Tibial artery (tissue), 4 donors: ENCODE measurements at regions of chr17 and their contacts with region 1.

Region 1: GRCh38 chr17:39045948-39046679 is 78.9 kb upstream of the FBXO47 start:
- DNase-seq: no peak
- H3K4me3 ChIP-seq: no peak overlapping the region
- H3K27ac ChIP-seq: no peak overlapping the region
- H3K4me1 ChIP-seq: no peaks in the 10 kb centered on the region
- H3K27me3 ChIP-seq: peaks cover 0 to 6% of the 10 kb centered on the region in 2 donors
- CTCF ChIP-seq: no peak

Region 2: GRCh38 chr17:37147301-37147812 is 1898.8 kb before region 1 on chr17:
- intact Hi-C with region 1: loop called (anchors 10 kb)
- DNase-seq: no peak
- H3K4me3 ChIP-seq: no peak overlapping the region
- H3K27ac ChIP-seq: no peak overlapping the region
- H3K4me1 ChIP-seq: no peaks in the 10 kb centered on the region
- H3K27me3 ChIP-seq: no peaks in the 10 kb centered on the region
- CTCF ChIP-seq: no peak

Region 3: DNA sequence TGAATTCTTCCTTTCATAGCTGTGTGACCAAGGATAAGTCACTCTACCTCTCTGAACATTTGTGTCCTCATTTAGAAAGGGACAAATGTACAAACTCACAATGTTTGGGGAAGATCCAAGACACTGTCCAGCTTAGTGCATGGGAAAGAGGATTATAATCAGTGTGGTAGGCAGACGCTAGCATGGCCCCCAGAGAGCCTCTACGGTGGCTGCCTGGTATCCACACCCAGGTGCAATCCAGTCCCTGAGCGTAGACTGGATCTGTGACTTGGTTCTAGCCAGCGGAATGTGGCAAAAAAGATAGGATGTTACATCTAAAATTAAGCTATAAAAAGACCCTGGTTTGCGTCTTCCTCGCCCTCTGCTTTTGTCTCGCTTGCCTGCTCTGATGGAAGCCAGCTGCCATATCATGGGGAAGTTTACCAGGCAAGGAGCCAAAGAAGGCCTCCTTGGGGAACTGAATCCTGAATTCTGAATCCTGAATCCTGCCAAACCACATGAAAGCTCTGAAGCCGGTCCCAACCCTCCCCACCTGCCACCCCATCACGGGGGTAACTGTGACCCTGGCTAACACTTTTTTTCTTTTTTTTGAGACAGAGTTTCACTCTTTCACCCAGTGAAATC is 53.7 kb after region 1 on chr17:
- intact Hi-C with region 1: no loop called
- DNase-seq: peak in 1 of 2 donors; percentile 35
- H3K4me3 ChIP-seq: no peak overlapping the region
- H3K27ac ChIP-seq: no peak overlapping the region
- H3K4me1 ChIP-seq: peaks cover 0 to 17% (median 3%) of the 10 kb centered on the region in 4 donors
- H3K27me3 ChIP-seq: no peaks in the 10 kb centered on the region
- CTCF ChIP-seq: no peak

Region 4: GRCh38 chr17:39401412-39402243 is 355.5 kb after region 1 on chr17 and contains the start of gene FBXL20:
- intact Hi-C with region 1: no loop called
- DNase-seq: peak; percentile 95 to 96
- H3K4me3 ChIP-seq: peak within 1 kb of the TSS; percentile 85
- H3K27ac ChIP-seq: peak within 1 kb of the TSS; percentile 90 to 97
- H3K4me1 ChIP-seq: peaks cover 0 to 35% (median 15%) of the 10 kb centered on the region in 4 donors
- H3K27me3 ChIP-seq: no peaks in the 10 kb centered on the region
- CTCF ChIP-seq: no peak